ENCODE measurements at regions of chr6 and their contacts with region 1.

Region 1: GRCh38 chr6:2639896-2640295 is 110.8 kb downstream of the MYLK4 start:
- DNase-seq: no peak
- H3K4me3 ChIP-seq: no peak overlapping the region
- H3K27ac ChIP-seq: no peak overlapping the region
- H3K4me1 ChIP-seq: peaks cover 0 to 3% (median under 1%) of the 10 kb centered on the region in 4 donors
- H3K27me3 ChIP-seq: peaks cover 8% of the 10 kb centered on the region
- CTCF ChIP-seq: no peak
- EP300 ChIP-seq: no peak
- POLR2A ChIP-seq: no peak

Region 2: DNA sequence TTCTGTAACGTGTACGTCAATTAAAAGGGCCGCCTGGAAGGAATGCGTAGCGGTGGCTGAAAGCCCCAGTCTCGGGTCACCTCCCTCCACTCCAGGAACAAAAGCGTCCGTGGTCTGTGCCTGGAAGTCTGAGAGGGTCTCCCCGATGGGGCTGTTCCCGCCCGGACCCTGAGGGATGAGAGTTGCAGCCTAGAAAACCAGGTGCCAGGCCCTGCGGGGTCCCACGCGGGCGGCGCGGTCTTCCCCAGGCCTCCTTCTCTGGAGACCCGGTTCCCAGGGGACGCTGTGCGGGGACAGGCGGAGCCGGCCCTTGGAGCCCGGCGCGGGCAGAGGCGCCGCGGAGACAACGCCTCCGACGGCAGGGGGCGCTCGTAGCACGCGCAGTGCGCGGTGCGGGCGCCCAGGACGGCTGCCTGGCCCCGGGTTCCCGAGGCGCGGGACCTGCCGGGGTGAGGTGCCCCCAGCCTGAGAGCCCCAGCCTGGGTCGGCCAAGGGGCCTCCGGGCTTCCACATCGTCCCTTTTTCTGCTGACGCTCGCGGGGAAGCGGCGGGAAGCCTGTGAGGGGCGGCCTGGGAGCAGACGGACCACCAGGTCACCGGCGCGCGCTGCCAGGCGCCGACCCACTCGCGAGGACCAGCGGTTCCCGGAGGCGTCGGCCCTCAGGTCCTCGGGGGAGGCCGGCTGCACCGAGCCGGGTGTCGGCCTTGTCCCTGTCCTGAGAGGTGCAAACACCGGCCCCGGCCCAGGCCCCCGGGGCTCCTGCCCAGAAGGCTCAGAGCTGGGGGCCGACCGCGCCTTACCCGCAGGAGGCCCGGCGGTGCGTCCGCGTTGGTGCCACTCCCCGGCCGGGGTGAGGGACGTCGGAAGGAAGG is 1035.5 kb before region 1 on chr6:
- in situ Hi-C with region 1: loop called (anchors 10 to 25 kb)
- intact Hi-C with region 1: loop called (anchors 5 kb)
- DNase-seq: peak; percentile 65
- H3K4me3 ChIP-seq: peak overlapping the region; percentile 1 to 48 (median 33)
- H3K27ac ChIP-seq: no peak overlapping the region
- H3K4me1 ChIP-seq: peaks cover 16 to 54% (median 34%) of the 10 kb centered on the region in 4 donors
- H3K27me3 ChIP-seq: peaks cover 99% of the 10 kb centered on the region
- CTCF ChIP-seq: peak; percentile 49 to 98 (median 94)
- EP300 ChIP-seq: no peak
- POLR2A ChIP-seq: no peak

Region 3: DNA sequence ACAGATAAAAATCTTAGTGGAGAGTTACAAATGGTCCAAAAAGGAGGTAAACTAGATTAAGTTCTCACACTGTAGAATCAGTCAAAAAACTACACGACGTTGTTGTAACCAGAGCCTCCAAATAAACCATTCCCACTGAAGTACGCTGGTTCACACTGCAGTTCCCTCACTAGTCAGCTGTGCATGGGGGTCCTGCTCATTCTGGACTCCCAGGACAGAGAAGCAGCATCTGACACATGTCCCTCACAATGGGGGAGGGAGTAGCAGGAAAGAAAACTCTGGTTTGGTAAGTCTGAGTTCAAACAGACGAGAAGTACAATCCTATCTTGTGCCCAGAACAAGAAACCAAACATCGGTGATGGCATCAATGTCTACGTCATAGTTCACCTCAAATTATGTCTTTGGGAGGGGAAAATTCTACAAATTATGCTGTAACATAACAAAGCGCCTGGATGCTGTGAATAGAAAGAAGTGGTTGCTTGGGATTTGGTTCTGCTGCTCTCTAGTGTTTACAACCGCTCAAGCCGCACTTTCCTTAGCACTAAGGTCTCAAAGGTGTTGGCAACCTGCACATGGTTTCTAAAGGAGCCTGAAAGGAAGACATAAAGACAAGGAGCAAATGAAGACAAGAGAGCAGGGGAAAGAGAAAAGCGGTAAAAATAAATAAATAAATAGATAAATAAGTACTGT is 602.5 kb before region 1 on chr6:
- in situ Hi-C with region 1: no loop called
- intact Hi-C with region 1: no loop called
- DNase-seq: no peak
- H3K4me3 ChIP-seq: no peak overlapping the region
- H3K27ac ChIP-seq: no peak overlapping the region
- H3K4me1 ChIP-seq: no peaks in the 10 kb centered on the region
- H3K27me3 ChIP-seq: no peaks in the 10 kb centered on the region
- CTCF ChIP-seq: no peak
- EP300 ChIP-seq: no peak
- POLR2A ChIP-seq: no peak

Region 4: DNA sequence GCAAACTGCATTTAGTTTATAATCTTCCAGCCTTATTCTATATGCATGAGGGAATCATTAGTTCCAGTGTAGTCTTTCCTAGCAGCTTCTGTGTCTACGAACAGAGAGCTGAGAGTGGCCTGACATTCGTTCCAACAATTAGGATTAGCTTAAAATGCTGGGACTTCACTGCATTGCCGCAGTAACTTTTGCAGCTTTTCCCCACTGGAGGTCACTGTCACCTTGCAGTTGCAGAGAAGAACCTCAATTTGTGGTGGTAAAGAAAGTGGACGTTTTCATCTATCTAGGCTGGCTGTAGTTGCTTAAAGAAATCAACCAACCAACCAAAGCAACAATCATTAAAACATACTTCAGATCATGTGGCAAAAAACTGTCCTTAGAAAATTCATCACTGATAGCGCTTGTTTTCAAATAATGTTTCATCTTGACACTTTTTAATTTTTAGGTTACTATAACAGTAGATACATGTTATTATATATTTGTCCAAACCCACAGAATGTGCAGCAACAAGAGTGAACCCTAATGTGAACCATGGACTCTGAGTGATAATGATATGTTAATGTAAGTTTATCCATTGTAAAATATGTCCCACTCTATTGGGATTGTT is 98.6 kb after region 1 on chr6:
- in situ Hi-C with region 1: no loop called
- intact Hi-C with region 1: no loop called
- DNase-seq: peak; percentile 25
- H3K4me3 ChIP-seq: no peak overlapping the region
- H3K27ac ChIP-seq: no peak overlapping the region
- H3K4me1 ChIP-seq: no peaks in the 10 kb centered on the region
- H3K27me3 ChIP-seq: no peaks in the 10 kb centered on the region
- CTCF ChIP-seq: peak; percentile 37 to 54 (median 42)
- EP300 ChIP-seq: no peak
- POLR2A ChIP-seq: no peak

Region 5: GRCh38 chr6:3363296-3364025 is 723.6 kb after region 1 on chr6:
- in situ Hi-C with region 1: no loop called
- intact Hi-C with region 1: no loop called
- DNase-seq: peak; percentile 89
- H3K4me3 ChIP-seq: no peak overlapping the region
- H3K27ac ChIP-seq: peak overlapping the region; percentile 60 to 83 (median 80)
- H3K4me1 ChIP-seq: peaks cover 4 to 37% (median 20%) of the 10 kb centered on the region in 4 donors
- H3K27me3 ChIP-seq: no peaks in the 10 kb centered on the region
- CTCF ChIP-seq: no peak
- EP300 ChIP-seq: no peak
- POLR2A ChIP-seq: peak; percentile 26

Measured in transverse colon (tissue), 4 donors.